AG04449 (cell line): ENCODE measurements at regions of chr1 and their contacts with region 1.

Region 1: DNA sequence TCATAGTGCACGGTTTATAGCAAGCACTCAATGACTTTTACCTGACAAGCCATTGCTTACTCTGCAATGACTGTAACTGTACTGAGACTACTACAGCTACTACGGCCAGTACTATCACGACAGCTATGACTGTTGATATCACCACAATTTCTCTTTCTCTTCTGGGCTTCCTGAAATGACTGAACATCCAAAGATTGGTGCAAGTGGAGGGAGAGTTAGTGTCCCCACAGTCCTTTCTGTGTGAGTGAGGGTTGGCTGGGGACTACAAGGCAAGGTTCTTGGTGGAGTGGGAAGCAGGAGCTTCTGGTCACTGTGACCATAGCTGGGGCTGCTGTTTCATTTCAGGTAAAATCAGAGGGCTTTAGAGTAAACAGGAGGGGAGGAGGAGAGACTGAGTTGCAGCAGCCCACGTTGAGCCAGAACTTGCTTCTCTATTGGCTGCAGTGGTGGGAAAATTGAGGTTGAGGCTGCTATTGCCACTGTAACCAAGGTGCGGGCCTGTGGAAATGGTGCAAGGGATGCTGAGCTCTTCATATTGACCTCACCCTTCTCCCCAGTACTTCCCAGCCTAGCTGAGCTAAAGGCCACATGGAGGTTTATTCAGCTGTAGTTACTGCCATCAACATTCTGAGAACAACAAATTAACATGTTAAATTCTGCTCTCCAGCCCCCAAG is 14.1 kb upstream of the IL10 start:
- DNase-seq: no peak
- H3K4me3 ChIP-seq: no peak overlapping the region
- CTCF ChIP-seq: no peak

Region 2: GRCh38 chr1:206797534-206798383 is 11.4 kb after region 1 on chr1:
- CTCF ChIA-PET with region 1: interaction called, 13 read pairs
- POLR2A ChIA-PET with region 1: no interaction called
- DNase-seq: no peak
- H3K4me3 ChIP-seq: no peak overlapping the region
- CTCF ChIP-seq: peak; percentile 50